ENCODE measurements at regions of chr15 and their contacts with region 1.

Region 1: GRCh38 chr15:76973362-76973743 is 21.6 kb upstream of the PSTPIP1 start:
- DNase-seq: peak; percentile 39 to 85 (median 75)
- ATAC-seq: peak; percentile 84
- H3K4me3 ChIP-seq: no peak overlapping the region
- H3K4me3 Mint-ChIP-seq: no peak overlapping the region
- H3K27ac ChIP-seq: no peak overlapping the region
- H3K27ac Mint-ChIP-seq: no peak overlapping the region
- H3K4me1 ChIP-seq: peaks cover 4% of the 10 kb centered on the region
- H3K4me1 Mint-ChIP-seq: peaks cover 14% of the 10 kb centered on the region
- H3K27me3 ChIP-seq: no peaks in the 10 kb centered on the region
- H3K27me3 Mint-ChIP-seq: no peaks in the 10 kb centered on the region
- CTCF ChIP-seq: peak; percentile 86

Region 2: DNA sequence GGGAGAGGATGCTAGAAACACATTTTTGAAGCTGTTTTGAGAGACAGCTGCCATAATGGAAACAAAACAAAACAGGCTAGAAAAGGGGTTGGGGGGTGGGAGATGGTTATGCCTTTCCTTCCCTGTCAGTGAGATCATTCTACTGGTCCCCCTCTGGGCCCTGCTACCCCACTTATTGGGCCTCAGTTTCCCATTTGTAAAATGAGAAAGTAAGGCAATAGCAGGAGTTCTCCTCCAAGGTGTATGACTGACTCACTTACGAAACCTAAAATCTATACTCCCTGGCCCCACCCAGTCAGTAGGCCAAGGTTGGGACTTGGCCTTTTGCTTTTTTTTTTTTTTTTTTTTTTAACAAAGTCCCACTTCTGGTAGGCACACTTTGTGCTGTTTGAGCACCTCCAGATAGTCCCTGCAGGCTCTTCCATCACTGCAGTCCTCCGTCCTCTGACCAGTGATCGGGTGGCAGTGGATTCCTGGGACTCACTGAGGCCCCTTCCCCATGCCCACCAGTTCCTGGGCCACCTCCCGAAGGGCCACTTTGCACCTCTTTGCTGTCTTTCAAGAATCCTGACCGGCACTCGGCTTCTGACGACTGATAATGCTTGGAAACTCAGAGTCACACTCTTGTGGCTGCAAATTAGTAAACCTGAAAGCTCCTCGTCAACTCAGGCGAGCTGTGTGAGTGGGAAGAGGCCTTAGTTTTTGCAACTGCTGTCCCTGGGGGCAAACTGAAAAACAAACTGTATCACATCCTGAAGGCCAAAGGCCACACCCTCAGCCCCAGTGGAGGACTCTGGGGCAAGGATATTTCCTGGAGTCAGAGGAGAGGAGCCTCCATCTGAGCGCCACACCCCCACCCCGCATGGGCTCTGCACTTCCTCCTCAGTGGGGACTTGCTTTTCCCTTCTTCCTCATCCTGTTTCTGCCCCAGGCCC is 14.8 kb after region 1 on chr15:
- CTCF ChIA-PET with region 1: interaction called, 76 read pairs
- POLR2A ChIA-PET with region 1: no interaction called
- intact Hi-C with region 1: no loop called
- DNase-seq: peak in 2 of 9 experiments; percentile 43 to 49
- ATAC-seq: peak; percentile 38
- H3K4me3 ChIP-seq: no peak overlapping the region
- H3K4me3 Mint-ChIP-seq: peak overlapping the region; percentile 42
- H3K27ac ChIP-seq: peak overlapping the region in 1 of 2 experiments; percentile 55
- H3K27ac Mint-ChIP-seq: peak overlapping the region; percentile 55
- H3K4me1 ChIP-seq: peaks cover 9% of the 10 kb centered on the region
- H3K4me1 Mint-ChIP-seq: peaks cover 21% of the 10 kb centered on the region
- H3K27me3 ChIP-seq: no peaks in the 10 kb centered on the region
- H3K27me3 Mint-ChIP-seq: no peaks in the 10 kb centered on the region
- CTCF ChIP-seq: no peak

Region 3: GRCh38 chr15:77034695-77035489 is 61.5 kb after region 1 on chr15:
- CTCF ChIA-PET with region 1: interaction called, 97 read pairs
- POLR2A ChIA-PET with region 1: no interaction called
- intact Hi-C with region 1: loop called (anchors 1 kb)
- DNase-seq: peak in 6 of 9 experiments; percentile 51 to 64 (median 60)
- ATAC-seq: peak; percentile 63
- H3K4me3 ChIP-seq: no peak overlapping the region
- H3K4me3 Mint-ChIP-seq: no peak overlapping the region
- H3K27ac ChIP-seq: peak overlapping the region in 1 of 2 experiments; percentile 36
- H3K27ac Mint-ChIP-seq: peak overlapping the region; percentile 72
- H3K4me1 ChIP-seq: no peaks in the 10 kb centered on the region
- H3K4me1 Mint-ChIP-seq: peaks cover 3% of the 10 kb centered on the region
- H3K27me3 ChIP-seq: no peaks in the 10 kb centered on the region
- H3K27me3 Mint-ChIP-seq: no peaks in the 10 kb centered on the region
- CTCF ChIP-seq: peak; percentile 31

Measured in CD8-positive, alpha-beta T cell (primary cell).